CD4-positive, alpha-beta memory T cell (primary cell): ENCODE measurements at regions of chr10 and their contacts with region 1.

Region 1: GRCh38 chr10:109902934-109903589 is 20.2 kb downstream of the XPNPEP1 start:
- DNase-seq: peak in 3 of 5 donors; percentile 26 to 56 (median 39)
- H3K4me3 ChIP-seq: peak overlapping the region in 1 of 2 donors; percentile 13
- H3K4me3 Mint-ChIP-seq: peak overlapping the region in 7 of 8 donors; percentile 57 to 88 (median 79)
- H3K27ac ChIP-seq: no peak overlapping the region
- H3K27ac Mint-ChIP-seq: peak overlapping the region; percentile 73 to 95 (median 89)
- H3K4me1 ChIP-seq: peaks cover 35% of the 10 kb centered on the region
- H3K4me1 Mint-ChIP-seq: peaks cover 38 to 82% (median 68%) of the 10 kb centered on the region in 4 donors
- H3K27me3 ChIP-seq: no peaks in the 10 kb centered on the region
- H3K27me3 Mint-ChIP-seq: no peaks in the 10 kb centered on the region

Region 2: DNA sequence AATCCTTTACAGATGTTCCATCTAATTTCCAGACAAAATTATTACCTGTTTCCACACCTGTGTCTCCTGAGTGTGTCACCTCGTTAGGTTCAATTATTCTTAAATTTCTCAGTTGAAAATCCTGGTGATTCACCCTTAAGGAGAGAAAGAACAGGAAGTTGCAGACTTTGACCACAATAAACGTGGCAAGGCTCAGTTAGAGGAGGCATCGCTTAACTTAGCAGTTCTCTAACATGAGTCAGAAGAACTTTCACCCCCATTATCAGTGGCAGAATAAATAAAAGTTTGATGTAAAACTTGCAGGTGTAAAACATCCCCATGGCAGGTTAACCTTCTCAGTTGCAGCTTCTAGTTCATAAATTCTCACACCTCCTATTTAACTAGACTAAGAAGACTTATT is 11.9 kb after region 1 on chr10:
- CTCF ChIA-PET with region 1: interaction called, 5 read pairs
- POLR2A ChIA-PET with region 1: interaction called, 17 read pairs
- intact Hi-C with region 1: no loop called
- DNase-seq: peak; percentile 56 to 84 (median 60)
- H3K4me3 ChIP-seq: peak overlapping the region in 1 of 2 donors; percentile 15
- H3K4me3 Mint-ChIP-seq: peak overlapping the region in 7 of 8 donors; percentile 29 to 80 (median 72)
- H3K27ac ChIP-seq: peak overlapping the region; percentile 29
- H3K27ac Mint-ChIP-seq: peak overlapping the region; percentile 32 to 94 (median 77)
- H3K4me1 ChIP-seq: peaks cover 81% of the 10 kb centered on the region
- H3K4me1 Mint-ChIP-seq: peaks cover 58 to 95% (median 75%) of the 10 kb centered on the region in 4 donors
- H3K27me3 ChIP-seq: no peaks in the 10 kb centered on the region
- H3K27me3 Mint-ChIP-seq: no peaks in the 10 kb centered on the region